ENCODE measurements at regions of chr1 and their contacts with region 1.

Region 1: GRCh38 chr1:180981596-180982387 is 40.9 kb downstream of the STX6 start:
- DNase-seq: peak; percentile 62
- H3K4me3 Mint-ChIP-seq: peak overlapping the region; percentile 61
- H3K27ac Mint-ChIP-seq: peak overlapping the region; percentile 37
- H3K4me1 Mint-ChIP-seq: peaks cover 35% of the 10 kb centered on the region
- H3K27me3 Mint-ChIP-seq: no peaks in the 10 kb centered on the region

Region 2: GRCh38 chr1:180502360-180503273 is 479.2 kb before region 1 on chr1 and contains the start of gene ACBD6:
- intact Hi-C with region 1: loop called (anchors 1 kb)
- DNase-seq: peak; percentile 81
- H3K4me3 Mint-ChIP-seq: peak within 1 kb of the TSS; percentile 97
- H3K27ac Mint-ChIP-seq: peak within 1 kb of the TSS; percentile 97
- H3K4me1 Mint-ChIP-seq: peaks cover 25% of the 10 kb centered on the region
- H3K27me3 Mint-ChIP-seq: peaks cover 3% of the 10 kb centered on the region
- total RNA-seq, gene ACBD6: 49.4 and 50.9 TPM in 2 replicates

Region 3: DNA sequence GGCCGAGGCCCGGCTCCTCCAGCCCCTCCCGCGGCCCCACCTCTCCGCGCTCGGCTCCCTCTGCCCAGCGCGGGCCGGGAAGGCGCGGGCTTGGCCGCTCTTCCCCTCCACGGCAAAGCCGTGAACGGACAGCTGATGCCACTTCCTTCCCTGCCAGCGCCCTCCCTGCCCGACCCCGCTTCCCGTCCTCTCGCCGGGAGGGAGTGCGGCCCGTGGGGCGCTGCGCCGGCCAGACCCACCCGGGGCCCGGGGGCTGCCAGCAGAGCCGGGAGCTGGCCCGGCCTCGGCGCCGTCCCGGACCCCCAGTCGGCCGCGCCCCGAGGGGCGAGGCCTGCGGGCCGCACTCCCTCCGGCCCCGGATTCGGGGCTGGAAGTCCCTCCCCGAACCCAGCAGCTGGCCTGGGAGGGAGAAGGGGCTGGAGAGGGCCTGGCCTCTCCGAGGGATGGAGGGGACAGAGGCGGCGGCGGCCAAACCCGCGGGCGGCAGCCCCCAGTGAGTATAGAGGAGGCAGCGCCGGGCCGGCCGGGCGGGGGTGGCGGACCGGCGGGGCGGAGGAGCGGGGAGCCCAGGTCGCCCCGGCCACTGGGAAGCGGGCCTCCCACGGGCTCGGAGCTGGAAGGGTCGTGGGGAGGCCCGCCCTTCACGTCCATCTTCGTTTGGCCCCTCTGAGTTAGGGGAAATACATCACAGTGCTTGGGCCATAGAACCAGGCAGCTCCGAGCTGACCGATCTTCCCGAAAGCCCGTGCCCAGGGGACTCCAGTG is 68.8 kb before region 1 on chr1 and contains the start of gene KIAA1614:
- intact Hi-C with region 1: loop called (anchors 5 kb)
- DNase-seq: no peak
- H3K4me3 Mint-ChIP-seq: peak within 1 kb of the TSS; percentile 71
- H3K27ac Mint-ChIP-seq: peak within 1 kb of the TSS; percentile 29
- H3K4me1 Mint-ChIP-seq: peaks cover 23% of the 10 kb centered on the region
- H3K27me3 Mint-ChIP-seq: peaks cover 41% of the 10 kb centered on the region
- total RNA-seq, gene KIAA1614: 0.16 and 0.17 TPM in 2 replicates

Region 4: GRCh38 chr1:180994262-180994661 is 12.5 kb after region 1 on chr1:
- intact Hi-C with region 1: loop called (anchors 2 kb)
- DNase-seq: no peak
- H3K4me3 Mint-ChIP-seq: no peak overlapping the region
- H3K27ac Mint-ChIP-seq: no peak overlapping the region
- H3K4me1 Mint-ChIP-seq: peaks cover 13% of the 10 kb centered on the region
- H3K27me3 Mint-ChIP-seq: no peaks in the 10 kb centered on the region

Region 5: GRCh38 chr1:181021811-181022434 is 40.1 kb after region 1 on chr1:
- intact Hi-C with region 1: loop called (anchors 1 kb)
- DNase-seq: peak; percentile 37
- H3K4me3 Mint-ChIP-seq: peak overlapping the region; percentile 96
- H3K27ac Mint-ChIP-seq: peak overlapping the region; percentile 97
- H3K4me1 Mint-ChIP-seq: peaks cover 46% of the 10 kb centered on the region
- H3K27me3 Mint-ChIP-seq: peaks cover 15% of the 10 kb centered on the region

Region 6: GRCh38 chr1:181083842-181084605 is 102.2 kb after region 1 on chr1:
- intact Hi-C with region 1: no loop called
- DNase-seq: peak; percentile 54
- H3K4me3 Mint-ChIP-seq: no peak overlapping the region
- H3K27ac Mint-ChIP-seq: peak overlapping the region; percentile 13
- H3K4me1 Mint-ChIP-seq: peaks cover 47% of the 10 kb centered on the region
- H3K27me3 Mint-ChIP-seq: peaks cover 21% of the 10 kb centered on the region